Natural killer cell (primary cell): ENCODE measurements at regions of chr5 and their contacts with region 1.

Region 1: DNA sequence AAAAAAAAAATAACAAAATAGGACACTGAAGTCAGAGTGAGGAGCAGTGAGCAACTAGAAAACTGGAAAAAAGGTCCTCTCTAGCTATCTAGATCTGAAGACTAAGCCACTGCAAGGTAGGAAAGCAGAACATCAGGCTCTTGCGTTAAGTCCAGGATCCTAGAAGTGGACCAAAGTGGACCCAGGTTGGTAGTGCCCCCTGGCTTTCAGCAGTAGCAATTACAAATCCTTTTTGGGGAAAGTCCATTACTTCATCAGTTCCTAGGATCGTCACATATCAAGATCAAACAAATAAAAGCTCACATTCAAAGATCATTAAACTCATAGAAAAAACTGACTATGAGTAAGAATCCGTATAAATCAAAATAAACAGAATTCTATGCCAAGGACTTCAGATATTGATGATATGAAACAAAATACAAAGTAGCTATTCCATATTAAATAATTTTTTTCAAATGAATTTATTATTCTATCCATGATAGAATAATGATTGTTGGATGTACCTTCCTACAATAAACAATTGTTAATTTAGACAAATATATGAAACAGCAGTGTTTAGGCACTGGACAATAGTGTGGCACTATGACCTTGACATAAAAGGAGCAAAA is 6.5 kb upstream of the RICTOR start:
- DNase-seq: peak; percentile 31 to 72
- ATAC-seq: peak; percentile 83 to 98 (median 89)
- H3K4me3 ChIP-seq: no peak overlapping the region
- H3K4me3 Mint-ChIP-seq: no peak overlapping the region
- H3K27ac ChIP-seq: no peak overlapping the region
- H3K27ac Mint-ChIP-seq: peak overlapping the region in 1 of 2 donors; percentile 47
- H3K4me1 ChIP-seq: no peaks in the 10 kb centered on the region
- H3K4me1 Mint-ChIP-seq: peaks cover 5 to 13% of the 10 kb centered on the region in 2 donors
- H3K27me3 ChIP-seq: peaks cover 13% of the 10 kb centered on the region
- H3K27me3 Mint-ChIP-seq: peaks cover 9 to 11% of the 10 kb centered on the region in 2 donors
- CTCF ChIP-seq: peak; percentile 84

Region 2: DNA sequence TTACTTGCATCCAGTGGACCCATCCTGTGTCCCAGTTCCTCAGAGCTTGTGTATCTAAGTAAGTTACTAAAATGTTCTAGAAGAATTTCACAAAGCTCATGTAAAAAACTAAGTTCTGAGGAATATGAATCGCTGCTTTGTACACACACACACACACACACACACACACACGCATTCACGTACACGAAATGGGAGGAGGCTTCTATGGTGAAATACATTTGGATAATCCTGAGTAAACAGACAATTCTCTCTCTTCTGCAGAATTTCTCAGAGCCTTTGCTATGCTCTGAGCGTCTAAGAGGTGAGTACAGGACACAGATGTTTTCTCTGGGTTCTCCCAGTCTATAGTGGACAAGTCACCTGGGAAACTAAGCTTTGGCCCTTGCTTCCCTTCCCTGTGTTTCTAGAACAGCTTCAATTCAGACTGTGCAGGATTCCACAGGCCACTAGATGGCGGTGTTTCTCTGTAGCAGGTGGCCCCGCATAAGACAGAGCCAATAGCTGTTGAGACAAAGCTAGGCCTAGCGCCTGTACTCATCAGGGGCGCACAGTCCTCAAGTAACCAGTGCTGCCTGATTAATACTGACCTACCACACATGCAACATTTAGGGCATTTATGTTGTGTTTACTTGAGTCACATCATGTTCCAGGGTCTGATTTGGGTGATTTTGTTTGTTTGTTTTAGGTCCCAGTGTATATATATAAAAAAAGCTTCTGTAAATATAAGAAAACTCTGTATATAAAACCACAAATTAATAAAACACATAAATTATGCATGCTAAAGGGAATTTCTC is 639.1 kb before region 1 on chr5:
- intact Hi-C with region 1: loop called (anchors 5 kb)
- DNase-seq: peak; percentile 60 to 90
- ATAC-seq: peak; percentile 93 to 100 (median 97)
- H3K4me3 ChIP-seq: no peak overlapping the region
- H3K4me3 Mint-ChIP-seq: no peak overlapping the region
- H3K27ac ChIP-seq: no peak overlapping the region
- H3K27ac Mint-ChIP-seq: no peak overlapping the region
- H3K4me1 ChIP-seq: no peaks in the 10 kb centered on the region
- H3K4me1 Mint-ChIP-seq: no peaks in the 10 kb centered on the region
- H3K27me3 ChIP-seq: peaks cover 2% of the 10 kb centered on the region
- H3K27me3 Mint-ChIP-seq: peaks cover 20 to 52% of the 10 kb centered on the region in 2 donors
- CTCF ChIP-seq: peak; percentile 97

Region 3: DNA sequence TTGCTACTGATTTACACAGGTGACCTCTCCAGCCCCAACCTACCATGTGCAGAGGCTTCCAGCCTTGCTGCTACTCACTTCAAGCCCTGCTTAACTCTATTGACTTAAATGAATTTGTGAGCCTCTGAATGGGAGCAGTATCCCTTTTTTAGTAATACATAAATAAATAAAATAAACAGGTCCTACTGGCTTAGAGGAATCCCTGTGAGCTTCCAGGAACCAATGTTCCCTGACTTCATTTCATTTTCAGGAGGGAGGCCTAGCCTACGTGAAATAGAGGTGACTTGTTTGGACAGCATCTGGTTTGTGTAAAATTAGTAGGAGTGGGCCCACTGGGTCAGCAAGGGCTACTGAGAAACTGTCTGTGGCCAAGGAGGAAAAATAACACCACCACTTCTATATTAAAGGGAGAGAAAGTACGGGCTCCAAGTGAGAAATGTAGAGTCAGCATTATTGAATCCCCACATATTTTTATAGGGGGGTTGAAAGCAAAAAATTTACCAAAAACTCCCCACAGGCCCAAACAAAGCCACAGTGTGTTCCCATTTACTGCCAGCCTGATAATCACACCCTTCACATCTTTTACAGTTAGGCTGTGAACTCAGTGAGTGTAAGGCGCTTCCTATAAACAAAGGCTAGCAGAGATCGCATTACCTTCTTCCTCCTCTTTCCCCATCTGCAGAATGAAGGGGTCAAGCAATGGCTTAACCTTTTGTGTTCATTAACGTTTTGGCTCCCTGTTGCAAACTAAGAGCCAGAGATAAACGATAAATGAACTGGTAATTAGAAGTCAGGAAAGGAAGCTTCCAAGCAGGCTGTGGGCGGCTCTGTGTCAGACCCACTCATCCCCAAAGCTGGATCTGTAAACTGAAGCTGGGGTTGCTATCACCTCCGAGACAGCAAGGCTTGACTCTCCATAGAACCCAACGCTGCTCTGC is 385.4 kb before region 1 on chr5:
- intact Hi-C with region 1: no loop called
- DNase-seq: no peak
- ATAC-seq: no peak
- H3K4me3 ChIP-seq: no peak overlapping the region
- H3K4me3 Mint-ChIP-seq: no peak overlapping the region
- H3K27ac ChIP-seq: no peak overlapping the region
- H3K27ac Mint-ChIP-seq: no peak overlapping the region
- H3K4me1 ChIP-seq: no peaks in the 10 kb centered on the region
- H3K4me1 Mint-ChIP-seq: no peaks in the 10 kb centered on the region
- H3K27me3 ChIP-seq: no peaks in the 10 kb centered on the region
- H3K27me3 Mint-ChIP-seq: peaks cover 7 to 25% of the 10 kb centered on the region in 2 donors
- CTCF ChIP-seq: no peak

Region 4: DNA sequence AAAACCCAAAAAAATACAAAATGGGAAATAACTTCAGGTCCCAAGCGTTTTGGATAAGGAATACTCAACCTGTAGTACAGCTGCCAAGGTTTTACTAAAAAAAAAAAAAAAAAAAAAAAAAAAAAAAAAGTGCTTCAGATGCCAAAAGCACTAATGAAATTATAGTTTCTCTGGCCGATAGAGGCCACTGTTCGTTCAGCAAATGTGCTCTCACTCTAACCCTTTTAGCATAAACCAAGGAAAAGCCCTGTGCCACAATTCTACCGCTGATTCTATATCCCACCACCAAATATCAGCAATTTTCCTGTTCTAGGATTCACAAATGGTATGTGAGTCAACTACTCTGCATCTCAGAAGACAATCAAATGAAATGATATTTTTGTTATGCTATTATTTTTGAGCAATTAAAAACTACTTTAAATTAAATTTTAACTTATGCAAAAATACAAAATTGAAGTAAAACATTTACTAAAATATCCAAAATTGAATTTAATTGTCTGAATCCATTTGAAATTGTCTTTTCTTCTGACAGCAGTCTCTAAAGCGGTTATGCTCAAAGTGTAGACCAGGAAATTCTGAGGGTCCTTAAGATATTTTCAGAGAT is 86.3 kb before region 1 on chr5:
- intact Hi-C with region 1: loop called (anchors 1 kb)
- DNase-seq: peak in 1 of 2 donors; percentile 73
- ATAC-seq: peak; percentile 63 to 81 (median 69)
- H3K4me3 ChIP-seq: no peak overlapping the region
- H3K4me3 Mint-ChIP-seq: no peak overlapping the region
- H3K27ac ChIP-seq: no peak overlapping the region
- H3K27ac Mint-ChIP-seq: no peak overlapping the region
- H3K4me1 ChIP-seq: no peaks in the 10 kb centered on the region
- H3K4me1 Mint-ChIP-seq: peaks cover 28 to 30% of the 10 kb centered on the region in 2 donors
- H3K27me3 ChIP-seq: no peaks in the 10 kb centered on the region
- H3K27me3 Mint-ChIP-seq: no peaks in the 10 kb centered on the region
- CTCF ChIP-seq: peak; percentile 43

Region 5: GRCh38 chr5:39005566-39006232 is 75.0 kb before region 1 on chr5:
- intact Hi-C with region 1: loop called (anchors 1 kb)
- DNase-seq: peak in 1 of 2 donors; percentile 55
- ATAC-seq: peak; percentile 59 to 77 (median 75)
- H3K4me3 ChIP-seq: no peak overlapping the region
- H3K4me3 Mint-ChIP-seq: no peak overlapping the region
- H3K27ac ChIP-seq: no peak overlapping the region
- H3K27ac Mint-ChIP-seq: peak overlapping the region; percentile 70 to 75
- H3K4me1 ChIP-seq: no peaks in the 10 kb centered on the region
- H3K4me1 Mint-ChIP-seq: peaks cover 37 to 45% of the 10 kb centered on the region in 2 donors
- H3K27me3 ChIP-seq: no peaks in the 10 kb centered on the region
- H3K27me3 Mint-ChIP-seq: no peaks in the 10 kb centered on the region
- CTCF ChIP-seq: peak; percentile 46